CD8-positive, alpha-beta memory T cell (primary cell): ENCODE measurements at regions of chr12 and their contacts with region 1.

Region 1: DNA sequence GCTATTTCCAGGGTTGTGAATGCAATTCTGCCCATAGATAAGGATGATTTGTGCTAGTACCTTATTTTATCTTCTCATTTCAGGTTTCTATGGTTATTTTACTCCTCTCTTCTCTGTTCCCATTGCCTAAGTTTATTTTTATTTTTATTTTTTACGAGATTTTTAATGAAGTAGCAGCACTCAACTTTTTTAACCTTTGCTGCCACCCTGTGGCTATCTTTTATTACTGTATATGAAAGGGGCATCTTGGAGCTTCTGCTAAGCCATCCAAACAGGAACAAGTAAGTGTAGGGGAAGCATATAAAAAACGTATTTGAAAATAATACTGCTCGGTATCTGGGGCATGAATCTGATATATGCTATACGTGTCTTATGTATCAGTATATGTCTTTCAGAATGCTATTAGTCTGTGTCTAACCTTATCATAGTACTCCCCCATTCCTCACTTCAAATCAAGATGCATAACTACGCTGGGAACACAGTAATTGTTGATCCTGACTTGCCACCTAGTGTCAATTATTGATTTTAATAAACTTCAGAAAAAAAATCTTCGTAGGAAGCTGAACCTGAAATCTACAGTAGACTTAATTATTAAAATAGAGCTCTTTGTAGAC is 60.3 kb downstream of the KLRG1 start:
- DNase-seq: peak in 2 of 5 donors; percentile 44 to 48
- H3K4me3 ChIP-seq: no peak overlapping the region
- H3K4me3 Mint-ChIP-seq: peak overlapping the region in 2 of 7 donors; percentile 24 to 74
- H3K27ac ChIP-seq: no peak overlapping the region
- H3K27ac Mint-ChIP-seq: peak overlapping the region in 7 of 8 donors; percentile 50 to 93 (median 82)
- H3K4me1 ChIP-seq: peaks cover 17% of the 10 kb centered on the region
- H3K4me1 Mint-ChIP-seq: peaks cover 39 to 60% (median 39%) of the 10 kb centered on the region in 3 donors
- H3K27me3 ChIP-seq: no peaks in the 10 kb centered on the region
- H3K27me3 Mint-ChIP-seq: peaks cover 0 to 2% of the 10 kb centered on the region in 2 donors

Region 2: GRCh38 chr12:8681041-8681902 is 368.4 kb before region 1 on chr12:
- CTCF ChIA-PET with region 1: interaction called, 19 read pairs
- POLR2A ChIA-PET with region 1: no interaction called
- DNase-seq: no peak
- H3K4me3 ChIP-seq: no peak overlapping the region
- H3K4me3 Mint-ChIP-seq: no peak overlapping the region
- H3K27ac ChIP-seq: no peak overlapping the region
- H3K27ac Mint-ChIP-seq: peak overlapping the region in 1 of 8 donors; percentile 10
- H3K4me1 ChIP-seq: no peaks in the 10 kb centered on the region
- H3K4me1 Mint-ChIP-seq: peaks cover 6 to 7% (median 7%) of the 10 kb centered on the region in 3 donors
- H3K27me3 ChIP-seq: no peaks in the 10 kb centered on the region
- H3K27me3 Mint-ChIP-seq: peaks cover 3 to 4% of the 10 kb centered on the region in 2 donors